ENCODE measurements at regions of chr5 and their contacts with region 1.

Region 1: DNA sequence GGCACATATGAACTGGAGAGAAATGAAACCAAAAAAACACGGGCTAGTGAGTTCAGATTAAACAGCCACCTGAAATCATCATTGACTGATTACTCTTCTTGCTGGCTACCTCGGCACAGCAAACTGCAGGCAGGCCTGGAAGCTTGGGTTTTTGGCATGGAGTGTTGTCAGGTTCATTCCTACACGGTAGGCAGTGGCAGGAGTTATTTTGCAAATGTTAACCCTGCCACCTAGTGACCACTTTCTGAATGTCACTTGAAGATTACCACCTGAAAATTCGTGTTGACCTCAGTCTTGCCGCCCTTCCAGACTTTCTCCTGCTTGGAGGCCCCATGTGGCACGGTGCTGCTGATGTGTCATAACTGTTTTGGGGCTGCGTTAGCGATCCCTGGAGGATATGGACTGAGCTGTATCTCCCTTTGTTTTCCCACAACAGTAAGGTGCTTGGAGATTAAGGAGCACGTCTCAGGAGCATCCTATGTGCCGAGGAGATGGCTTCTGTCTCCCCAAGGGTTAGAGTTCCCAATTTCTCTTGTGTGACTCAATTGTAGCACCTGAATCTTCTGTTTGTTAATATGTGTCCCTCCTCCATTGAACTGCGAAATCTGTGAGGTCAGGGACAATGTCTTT is 12.7 kb upstream of the CD180 start:
- DNase-seq: peak; percentile 63 to 73
- H3K4me3 ChIP-seq: no peak overlapping the region
- H3K27ac ChIP-seq: no peak overlapping the region
- H3K4me1 ChIP-seq: peaks cover 51% of the 10 kb centered on the region
- H3K27me3 ChIP-seq: no peaks in the 10 kb centered on the region
- CTCF ChIP-seq: peak; percentile 80

Region 2: GRCh38 chr5:66291771-66292170 is 917.5 kb before region 1 on chr5:
- CTCF ChIA-PET with region 1: no interaction called
- POLR2A ChIA-PET with region 1: interaction called, 25 read pairs
- intact Hi-C with region 1: no loop called
- DNase-seq: no peak
- H3K4me3 ChIP-seq: no peak overlapping the region
- H3K27ac ChIP-seq: no peak overlapping the region
- H3K4me1 ChIP-seq: no peaks in the 10 kb centered on the region
- H3K27me3 ChIP-seq: peaks cover 15% of the 10 kb centered on the region; the same call in 1 of the 2 replicates
- CTCF ChIP-seq: no peak

Region 3: GRCh38 chr5:66807743-66808142 is 401.5 kb before region 1 on chr5:
- CTCF ChIA-PET with region 1: no interaction called
- POLR2A ChIA-PET with region 1: no interaction called
- intact Hi-C with region 1: loop called (anchors 1 kb)
- DNase-seq: peak; percentile 32 to 79
- H3K4me3 ChIP-seq: no peak overlapping the region
- H3K27ac ChIP-seq: no peak overlapping the region
- H3K4me1 ChIP-seq: peaks cover 4% of the 10 kb centered on the region; the same call in 1 of the 2 replicates
- H3K27me3 ChIP-seq: no peaks in the 10 kb centered on the region
- CTCF ChIP-seq: peak; percentile 58

Region 4: DNA sequence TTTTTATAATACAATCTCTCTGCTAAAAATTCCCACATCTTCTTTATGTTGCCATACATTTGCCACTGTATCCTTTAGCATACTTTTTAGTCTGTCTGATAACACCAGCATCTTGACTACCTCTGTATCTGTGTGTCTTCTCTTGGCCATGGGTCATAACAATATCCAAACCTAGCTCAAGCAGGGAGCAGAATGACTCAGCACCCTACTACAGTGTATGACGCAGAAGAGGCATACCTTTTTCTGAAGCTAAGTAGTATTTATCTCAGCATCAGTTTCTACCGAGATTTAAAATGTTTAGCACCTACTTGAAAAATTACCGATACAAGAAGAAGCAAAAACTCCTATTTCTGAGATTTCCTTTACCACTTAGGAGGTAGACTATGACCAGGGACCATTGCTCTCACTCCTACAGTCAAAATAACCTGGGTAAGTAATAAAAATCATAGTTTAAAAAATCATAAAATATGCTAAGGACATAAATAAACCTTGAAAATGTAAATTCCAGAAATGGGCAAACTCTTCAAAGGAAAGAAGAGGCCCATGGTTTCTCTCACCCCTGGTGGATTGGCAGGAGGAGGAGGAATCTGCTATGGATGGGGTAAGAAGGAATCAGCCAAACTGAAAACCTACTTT is 326.5 kb before region 1 on chr5:
- CTCF ChIA-PET with region 1: no interaction called
- POLR2A ChIA-PET with region 1: no interaction called
- intact Hi-C with region 1: loop called (anchors 1 kb)
- DNase-seq: peak; percentile 37 to 84
- H3K4me3 ChIP-seq: peak overlapping the region; percentile 50
- H3K27ac ChIP-seq: peak overlapping the region; percentile 98
- H3K4me1 ChIP-seq: peaks cover 57% of the 10 kb centered on the region
- H3K27me3 ChIP-seq: no peaks in the 10 kb centered on the region
- CTCF ChIP-seq: no peak

Region 5: GRCh38 chr5:67156976-67157583 is 52.2 kb before region 1 on chr5:
- CTCF ChIA-PET with region 1: interaction called, 10 read pairs
- POLR2A ChIA-PET with region 1: interaction called, 28 read pairs
- intact Hi-C with region 1: loop called (anchors 1 kb)
- DNase-seq: peak in 1 of 2 experiments; percentile 45
- H3K4me3 ChIP-seq: no peak overlapping the region
- H3K27ac ChIP-seq: no peak overlapping the region
- H3K4me1 ChIP-seq: peaks cover 29% of the 10 kb centered on the region
- H3K27me3 ChIP-seq: no peaks in the 10 kb centered on the region
- CTCF ChIP-seq: peak; percentile 85

Measured in PC-9 (cell line).